Mammary epithelial cell (primary cell): ENCODE measurements at regions of chr19 and their contacts with region 1.

Region 1: GRCh38 chr19:35140962-35141637 is 2.0 kb upstream of the FXYD7 start:
- DNase-seq: peak; percentile 88
- H3K4me3 ChIP-seq: peak overlapping the region in 1 of 3 experiments; percentile 26
- H3K27ac ChIP-seq: no peak overlapping the region
- H3K4me1 ChIP-seq: peaks cover 33% of the 10 kb centered on the region
- H3K27me3 ChIP-seq: no peaks in the 10 kb centered on the region
- CTCF ChIP-seq: peak; percentile 19 to 79

Region 2: DNA sequence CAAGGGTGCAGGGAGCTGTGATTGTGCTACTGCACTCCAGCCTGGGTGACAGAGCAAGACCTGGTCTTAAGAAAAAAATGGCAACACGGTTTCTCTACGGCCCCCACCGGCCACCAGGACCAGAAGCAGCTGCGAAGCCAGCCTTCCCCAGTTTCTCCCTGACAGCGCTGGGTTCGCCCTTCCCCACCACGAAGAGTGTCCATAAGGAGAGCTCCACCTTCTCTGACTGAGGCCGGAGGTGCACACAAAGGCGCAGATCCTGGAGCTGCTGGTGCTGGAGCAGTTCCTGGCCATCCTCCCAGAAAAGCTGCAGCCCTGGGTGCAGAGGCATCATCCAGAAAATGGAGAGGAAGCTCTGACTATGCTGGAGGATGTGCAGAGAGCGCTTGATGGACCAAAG is 315.9 kb before region 1 on chr19:
- CTCF ChIA-PET with region 1: no interaction called
- dilution Hi-C with region 1: no loop called
- in situ Hi-C with region 1: no loop called
- intact Hi-C with region 1: no loop called
- DNase-seq: no peak
- H3K4me3 ChIP-seq: no peak overlapping the region
- H3K27ac ChIP-seq: no peak overlapping the region
- H3K4me1 ChIP-seq: no peaks in the 10 kb centered on the region
- H3K27me3 ChIP-seq: no peaks in the 10 kb centered on the region
- CTCF ChIP-seq: no peak

Region 3: GRCh38 chr19:35044317-35045117 is 96.6 kb before region 1 on chr19:
- CTCF ChIA-PET with region 1: interaction called, 7 read pairs
- dilution Hi-C with region 1: no loop called
- in situ Hi-C with region 1: no loop called
- intact Hi-C with region 1: loop called (anchors 1 kb)
- DNase-seq: peak; percentile 48
- H3K4me3 ChIP-seq: no peak overlapping the region
- H3K27ac ChIP-seq: no peak overlapping the region
- H3K4me1 ChIP-seq: peaks cover 11% of the 10 kb centered on the region
- H3K27me3 ChIP-seq: no peaks in the 10 kb centered on the region
- CTCF ChIP-seq: peak; percentile 93 to 96

Region 4: DNA sequence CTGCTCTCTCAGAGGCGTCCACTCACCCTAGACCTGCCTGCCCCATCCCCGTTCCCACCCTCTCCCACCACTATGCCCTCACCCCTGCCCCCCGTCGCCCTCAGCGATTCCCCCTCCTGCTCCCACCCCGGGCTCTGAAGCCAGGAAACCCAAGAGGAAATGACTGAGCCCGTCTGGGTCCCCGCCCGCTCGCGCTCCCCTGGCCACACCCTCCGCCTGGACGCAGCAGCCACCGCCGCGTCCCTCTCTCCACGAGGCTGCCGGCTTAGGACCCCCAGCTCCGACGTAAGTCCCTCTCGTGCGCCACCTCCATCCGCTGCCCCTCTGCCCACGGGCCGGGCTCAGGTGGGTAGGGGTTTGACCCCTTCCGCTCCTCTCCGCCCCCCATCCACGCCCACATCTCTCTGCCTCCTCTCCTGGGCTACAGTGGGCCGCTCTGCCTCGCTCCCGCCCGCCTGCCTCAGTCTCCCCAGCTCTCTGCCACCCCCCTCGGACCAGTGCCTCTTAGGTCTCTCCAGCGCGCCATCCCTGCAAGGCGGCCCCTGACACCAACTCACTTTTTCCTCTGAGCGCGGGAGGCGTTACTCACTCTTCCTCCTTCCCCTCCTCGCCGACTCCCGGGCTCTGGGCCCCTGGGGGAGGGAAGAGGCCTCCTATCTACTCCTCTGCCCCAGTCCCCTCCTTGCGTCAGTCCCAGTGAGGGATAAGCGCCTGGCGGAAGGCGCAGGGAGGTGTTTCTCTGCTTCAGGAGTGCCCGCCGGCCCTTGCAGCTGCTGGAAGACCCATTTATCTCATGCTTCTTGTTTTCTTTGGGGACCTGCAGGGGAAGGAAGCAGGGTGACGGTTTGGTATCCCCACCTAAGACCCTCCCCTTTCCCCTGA is 13.7 kb after region 1 on chr19 and contains the start of gene FXYD5:
- CTCF ChIA-PET with region 1: no interaction called
- dilution Hi-C with region 1: no loop called
- in situ Hi-C with region 1: no loop called
- intact Hi-C with region 1: loop called (anchors 1 kb)
- DNase-seq: peak; percentile 66
- H3K4me3 ChIP-seq: peak within 1 kb of the TSS; percentile 76 to 99 (median 85)
- H3K27ac ChIP-seq: peak within 1 kb of the TSS; percentile 46
- H3K4me1 ChIP-seq: peaks cover 18% of the 10 kb centered on the region
- H3K27me3 ChIP-seq: no peaks in the 10 kb centered on the region
- CTCF ChIP-seq: no peak
- total RNA-seq, gene FXYD5: 23.5 to 349 TPM

Region 5: DNA sequence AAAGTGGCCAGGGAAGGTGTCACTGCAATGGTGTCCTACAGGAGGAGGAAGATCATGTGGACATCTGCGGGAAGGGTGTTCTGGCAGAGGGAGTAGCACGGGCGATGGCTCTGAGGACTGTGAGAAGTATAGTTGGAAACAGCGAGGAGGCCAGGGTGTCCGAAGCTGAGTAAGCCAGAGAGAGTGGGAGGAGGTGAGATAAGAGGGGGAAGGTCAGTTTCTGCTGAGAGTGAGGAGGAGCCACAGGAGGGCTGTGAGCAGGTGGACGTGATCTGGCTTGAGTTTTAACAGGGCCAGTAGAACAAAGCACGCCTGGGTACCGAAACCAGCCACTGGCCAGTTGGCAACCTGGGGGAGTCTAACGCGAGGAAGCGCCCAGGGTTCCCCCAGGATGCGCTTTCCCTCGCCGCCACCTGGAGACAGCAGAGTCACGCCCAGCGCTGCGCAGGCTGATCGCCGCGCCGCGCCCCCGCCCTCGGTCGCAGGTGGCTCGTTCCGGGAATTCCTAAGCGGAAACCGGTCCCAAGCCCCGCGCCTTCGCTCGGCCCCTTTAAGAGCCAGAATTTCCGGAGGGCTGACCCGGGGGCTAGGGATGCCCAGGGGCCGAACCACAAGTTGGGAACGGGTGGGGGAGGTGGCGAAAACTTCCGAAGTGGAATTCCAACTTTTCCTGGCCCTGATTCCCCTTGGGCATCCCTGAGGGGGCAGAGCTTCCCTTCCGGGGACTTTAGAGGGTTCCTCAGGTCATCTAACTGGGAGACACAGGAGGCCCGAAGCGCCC is 106.6 kb after region 1 on chr19:
- CTCF ChIA-PET with region 1: no interaction called
- dilution Hi-C with region 1: no loop called
- in situ Hi-C with region 1: no loop called
- intact Hi-C with region 1: loop called (anchors 1 kb)
- DNase-seq: peak; percentile 96
- H3K4me3 ChIP-seq: peak overlapping the region; percentile 93 to 99 (median 95)
- H3K27ac ChIP-seq: peak overlapping the region; percentile 93
- H3K4me1 ChIP-seq: peaks cover 18% of the 10 kb centered on the region
- H3K27me3 ChIP-seq: no peaks in the 10 kb centered on the region
- CTCF ChIP-seq: peak; percentile 39 to 78

Region 6: GRCh38 chr19:35468637-35469036 is 327.5 kb after region 1 on chr19:
- CTCF ChIA-PET with region 1: no interaction called
- dilution Hi-C with region 1: no loop called
- in situ Hi-C with region 1: no loop called
- intact Hi-C with region 1: loop called (anchors 5 kb)
- DNase-seq: peak; percentile 24
- H3K4me3 ChIP-seq: no peak overlapping the region
- H3K27ac ChIP-seq: no peak overlapping the region
- H3K4me1 ChIP-seq: no peaks in the 10 kb centered on the region
- H3K27me3 ChIP-seq: no peaks in the 10 kb centered on the region
- CTCF ChIP-seq: peak; percentile 64 to 92